ENCODE measurements at regions of chr2 and their contacts with region 1.

Region 1: GRCh38 chr2:37414470-37414949 is 70.1 kb downstream of the QPCT start:
- DNase-seq: no peak
- ATAC-seq: peak; percentile 87 to 95 (median 88)
- H3K4me3 ChIP-seq: no peak overlapping the region
- H3K27ac ChIP-seq: no peak overlapping the region
- H3K4me1 ChIP-seq: peaks cover 0 to 3% (median 0%) of the 10 kb centered on the region in 4 donors
- H3K27me3 ChIP-seq: no peaks in the 10 kb centered on the region
- CTCF ChIP-seq: peak; percentile 73 to 95 (median 78)
- POLR2A ChIP-seq: no peak

Region 2: GRCh38 chr2:37832590-37833197 is 418.2 kb after region 1 on chr2:
- intact Hi-C with region 1: loop called (anchors 5 to 10 kb)
- DNase-seq: peak; percentile 86 to 91 (median 87)
- ATAC-seq: peak; percentile 96 to 97 (median 97)
- H3K4me3 ChIP-seq: no peak overlapping the region
- H3K27ac ChIP-seq: no peak overlapping the region
- H3K4me1 ChIP-seq: no peaks in the 10 kb centered on the region
- H3K27me3 ChIP-seq: no peaks in the 10 kb centered on the region
- CTCF ChIP-seq: peak; percentile 76 to 95 (median 84)
- POLR2A ChIP-seq: no peak

Measured in right lobe of liver (tissue), 6 donors.